CD4-positive, alpha-beta T cell (primary cell): ENCODE measurements at regions of chr15 and their contacts with region 1.

Region 1: GRCh38 chr15:81265944-81266775 is 57.8 kb downstream of the STARD5 start:
- DNase-seq: peak; percentile 71 to 92 (median 79)
- ATAC-seq: peak; percentile 89
- H3K4me3 ChIP-seq: peak overlapping the region; percentile 21
- H3K4me3 Mint-ChIP-seq: peak overlapping the region; percentile 66
- H3K27ac ChIP-seq: no peak overlapping the region
- H3K27ac Mint-ChIP-seq: no peak overlapping the region
- H3K4me1 ChIP-seq: peaks cover 23% of the 10 kb centered on the region
- H3K4me1 Mint-ChIP-seq: peaks cover 35% of the 10 kb centered on the region
- H3K27me3 ChIP-seq: no peaks in the 10 kb centered on the region
- H3K27me3 Mint-ChIP-seq: no peaks in the 10 kb centered on the region
- CTCF ChIP-seq: peak; percentile 75

Region 2: DNA sequence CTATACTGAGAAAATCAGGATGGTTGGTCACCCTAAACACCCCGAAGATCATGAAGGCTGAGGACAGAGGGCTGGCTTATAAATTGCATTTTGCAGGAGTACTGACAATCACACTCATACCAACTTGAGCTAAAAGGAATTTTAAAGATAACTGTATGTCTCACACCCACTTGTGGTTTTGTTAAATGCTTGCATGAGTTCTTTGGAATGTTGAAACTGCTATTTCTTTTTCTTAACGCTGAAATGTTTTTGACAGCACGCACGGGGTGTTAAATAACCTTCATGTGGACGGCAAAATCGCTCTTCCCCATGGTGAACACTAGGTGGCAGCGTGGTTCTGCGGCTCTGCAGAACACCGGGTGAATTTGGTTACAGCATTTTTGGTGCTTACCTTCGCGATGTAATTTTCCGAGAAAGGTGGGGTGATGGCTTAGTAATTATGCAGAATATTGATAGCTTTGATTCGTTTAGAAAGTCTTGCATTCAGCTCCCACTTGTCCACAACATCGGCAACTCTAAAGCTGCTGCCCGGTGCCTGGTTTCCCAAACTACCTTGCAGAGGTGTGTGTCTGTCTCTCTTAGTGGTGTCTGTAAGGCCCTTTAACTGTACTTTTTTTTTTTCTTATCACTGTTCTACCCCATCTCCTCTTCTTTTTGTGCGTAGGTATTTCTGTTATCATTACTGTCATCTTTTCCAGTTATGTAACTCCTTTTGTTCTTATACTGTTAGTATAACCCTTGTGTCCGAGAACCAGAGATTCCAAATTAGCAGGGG is 810.3 kb before region 1 on chr15:
- CTCF ChIA-PET with region 1: interaction called, 7 read pairs
- POLR2A ChIA-PET with region 1: no interaction called
- intact Hi-C with region 1: loop called (anchors 1 kb)
- DNase-seq: peak; percentile 17 to 81 (median 31)
- ATAC-seq: peak; percentile 64
- H3K4me3 ChIP-seq: no peak overlapping the region
- H3K4me3 Mint-ChIP-seq: no peak overlapping the region
- H3K27ac ChIP-seq: no peak overlapping the region
- H3K27ac Mint-ChIP-seq: no peak overlapping the region
- H3K4me1 ChIP-seq: peaks cover 2% of the 10 kb centered on the region
- H3K4me1 Mint-ChIP-seq: peaks cover 7% of the 10 kb centered on the region
- H3K27me3 ChIP-seq: peaks cover 0 to 11% of the 10 kb centered on the region in 2 experiments
- H3K27me3 Mint-ChIP-seq: peaks cover 23% of the 10 kb centered on the region
- CTCF ChIP-seq: peak; percentile 83

Region 3: DNA sequence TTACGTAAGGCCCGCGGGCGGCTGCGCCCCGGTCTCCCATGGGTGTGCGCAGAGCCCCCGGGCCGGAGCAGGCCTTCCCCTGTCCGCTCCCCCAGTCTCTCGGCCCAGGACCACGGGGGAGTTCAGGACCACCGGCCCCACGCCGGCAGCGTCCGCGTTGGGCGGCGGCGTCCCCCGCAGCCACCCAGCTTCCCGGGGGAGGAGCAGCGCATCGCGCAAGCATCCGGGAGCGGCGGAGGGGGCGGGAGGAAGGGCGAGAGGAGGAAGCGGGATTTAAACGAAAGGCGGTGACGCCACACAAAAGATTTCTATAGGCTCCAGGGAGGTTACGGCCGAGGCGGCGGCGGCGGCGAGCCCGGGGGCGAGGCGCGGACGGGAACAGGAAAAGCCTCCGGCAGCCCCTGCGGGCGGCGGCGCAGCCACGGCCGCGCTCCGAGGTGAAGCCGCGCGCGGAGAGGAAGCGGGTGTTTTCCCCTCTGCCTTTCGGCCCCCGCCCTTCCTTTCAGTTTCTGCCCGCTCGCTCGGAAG is 265.5 kb before region 1 on chr15 and contains the start of gene TLNRD1:
- CTCF ChIA-PET with region 1: interaction called, 3 read pairs
- POLR2A ChIA-PET with region 1: interaction called, 3 read pairs
- intact Hi-C with region 1: loop called in 1 of 2 experiments (anchors 5 kb)
- DNase-seq: peak; percentile 63 to 94 (median 76)
- ATAC-seq: peak; percentile 67
- H3K4me3 ChIP-seq: peak within 1 kb of the TSS; percentile 97
- H3K4me3 Mint-ChIP-seq: peak within 1 kb of the TSS; percentile 95
- H3K27ac ChIP-seq: peak within 1 kb of the TSS; percentile 94 to 96
- H3K27ac Mint-ChIP-seq: peak within 1 kb of the TSS; percentile 92
- H3K4me1 ChIP-seq: peaks cover 41% of the 10 kb centered on the region
- H3K4me1 Mint-ChIP-seq: peaks cover 62% of the 10 kb centered on the region
- H3K27me3 ChIP-seq: no peaks in the 10 kb centered on the region
- H3K27me3 Mint-ChIP-seq: no peaks in the 10 kb centered on the region
- CTCF ChIP-seq: no peak
- total RNA-seq, gene TLNRD1: 10.5 to 12.3 TPM

Region 4: DNA sequence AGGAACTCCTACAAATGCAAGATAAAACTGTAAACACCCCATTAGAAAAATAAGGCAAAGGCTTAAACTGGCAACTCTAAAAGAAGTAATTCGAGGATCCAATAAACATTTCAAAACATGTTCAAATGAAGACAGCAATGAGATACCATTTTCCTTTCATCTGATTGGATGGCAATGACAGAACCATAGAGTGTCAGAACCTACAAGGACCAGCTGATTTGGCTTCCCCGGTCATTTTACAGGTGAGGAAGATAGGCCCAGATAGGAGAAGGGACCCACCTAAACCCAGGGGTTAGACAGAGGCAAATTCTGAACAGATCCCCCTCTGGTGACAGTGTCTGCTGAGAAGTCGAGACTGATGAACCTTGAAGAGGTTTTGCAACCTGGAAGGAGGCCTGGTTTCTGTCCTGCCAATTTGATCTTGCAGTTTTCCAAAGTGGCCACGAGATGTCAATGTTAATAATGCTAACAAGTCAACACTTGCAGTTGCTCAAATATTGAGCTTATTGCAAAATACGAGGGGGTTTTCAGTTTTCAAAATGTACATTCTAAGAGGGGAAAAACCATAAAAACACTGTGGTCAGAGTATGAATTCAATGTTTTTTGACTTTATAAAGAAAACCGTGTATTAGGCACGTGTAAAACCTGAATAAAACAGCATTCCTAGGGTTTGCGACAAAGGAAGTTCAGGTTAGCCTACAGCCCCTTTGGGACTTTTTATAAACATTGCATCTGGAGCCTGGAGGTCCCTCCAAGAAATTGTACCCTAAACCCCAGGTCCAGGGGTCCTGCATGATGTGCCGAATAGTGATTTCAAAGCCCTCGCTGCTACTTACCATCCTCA is 110.6 kb before region 1 on chr15:
- CTCF ChIA-PET with region 1: interaction called, 24 read pairs
- POLR2A ChIA-PET with region 1: interaction called, 6 read pairs
- intact Hi-C with region 1: loop called (anchors 1 to 2 kb)
- DNase-seq: peak in 5 of 14 experiments; percentile 3 to 51 (median 40)
- ATAC-seq: no peak
- H3K4me3 ChIP-seq: no peak overlapping the region
- H3K4me3 Mint-ChIP-seq: no peak overlapping the region
- H3K27ac ChIP-seq: no peak overlapping the region
- H3K27ac Mint-ChIP-seq: no peak overlapping the region
- H3K4me1 ChIP-seq: peaks cover under 1% of the 10 kb centered on the region
- H3K4me1 Mint-ChIP-seq: peaks cover under 1% of the 10 kb centered on the region
- H3K27me3 ChIP-seq: no peaks in the 10 kb centered on the region
- H3K27me3 Mint-ChIP-seq: peaks cover 23% of the 10 kb centered on the region
- CTCF ChIP-seq: peak; percentile 43

Region 5: DNA sequence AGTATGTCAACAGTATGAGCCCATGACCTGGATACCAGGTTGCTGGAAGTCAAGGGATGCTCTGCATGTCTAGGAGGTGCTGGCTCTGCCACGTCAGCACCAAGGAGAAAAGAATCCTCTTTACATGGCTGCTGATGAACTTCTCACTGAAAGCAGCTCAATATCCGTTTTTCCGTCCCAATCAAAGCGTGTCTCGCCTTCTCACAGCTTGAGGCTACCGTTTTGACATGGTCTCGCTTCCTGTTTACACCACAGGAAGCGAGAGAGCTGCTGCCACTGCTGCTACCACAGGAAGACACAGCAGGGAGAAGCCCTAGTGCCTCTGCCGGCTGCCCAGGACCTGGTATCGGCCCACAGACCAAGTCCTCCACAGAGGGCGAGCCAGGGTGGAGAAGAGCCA is 30.5 kb after region 1 on chr15:
- CTCF ChIA-PET with region 1: interaction called, 17 read pairs
- POLR2A ChIA-PET with region 1: interaction called, 21 read pairs
- intact Hi-C with region 1: no loop called
- DNase-seq: peak; percentile 57 to 93 (median 73)
- ATAC-seq: peak; percentile 45
- H3K4me3 ChIP-seq: peak overlapping the region; percentile 96
- H3K4me3 Mint-ChIP-seq: peak overlapping the region; percentile 99
- H3K27ac ChIP-seq: peak overlapping the region; percentile 94 to 95
- H3K27ac Mint-ChIP-seq: peak overlapping the region; percentile 92
- H3K4me1 ChIP-seq: peaks cover 73% of the 10 kb centered on the region
- H3K4me1 Mint-ChIP-seq: peaks cover 68% of the 10 kb centered on the region
- H3K27me3 ChIP-seq: no peaks in the 10 kb centered on the region
- H3K27me3 Mint-ChIP-seq: no peaks in the 10 kb centered on the region
- CTCF ChIP-seq: no peak

Region 6: DNA sequence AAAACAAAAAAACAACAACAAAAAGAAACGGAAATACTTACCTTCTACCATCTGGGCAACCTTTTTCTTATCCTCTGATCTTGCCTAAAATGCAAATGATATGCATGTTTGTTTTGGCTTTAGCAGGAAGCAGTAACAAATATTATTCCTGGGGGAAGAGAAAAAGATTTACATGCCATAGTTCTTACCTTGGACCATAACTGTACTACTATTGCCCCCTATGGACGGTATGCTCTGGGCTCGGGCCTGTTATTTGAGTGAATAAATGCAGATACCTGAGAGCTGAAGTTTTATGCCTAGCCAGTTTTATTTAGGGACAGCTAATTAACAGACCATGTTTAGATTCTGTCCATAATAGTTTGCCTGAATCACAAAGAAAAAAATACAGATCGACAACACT is 70.4 kb after region 1 on chr15:
- CTCF ChIA-PET with region 1: interaction called, 11 read pairs
- POLR2A ChIA-PET with region 1: interaction called, 3 read pairs
- intact Hi-C with region 1: no loop called
- DNase-seq: peak in 11 of 14 experiments; percentile 23 to 71 (median 50)
- ATAC-seq: no peak
- H3K4me3 ChIP-seq: no peak overlapping the region
- H3K4me3 Mint-ChIP-seq: no peak overlapping the region
- H3K27ac ChIP-seq: no peak overlapping the region
- H3K27ac Mint-ChIP-seq: no peak overlapping the region
- H3K4me1 ChIP-seq: no peaks in the 10 kb centered on the region
- H3K4me1 Mint-ChIP-seq: peaks cover 13% of the 10 kb centered on the region
- H3K27me3 ChIP-seq: no peaks in the 10 kb centered on the region
- H3K27me3 Mint-ChIP-seq: no peaks in the 10 kb centered on the region
- CTCF ChIP-seq: peak; percentile 71

Region 7: DNA sequence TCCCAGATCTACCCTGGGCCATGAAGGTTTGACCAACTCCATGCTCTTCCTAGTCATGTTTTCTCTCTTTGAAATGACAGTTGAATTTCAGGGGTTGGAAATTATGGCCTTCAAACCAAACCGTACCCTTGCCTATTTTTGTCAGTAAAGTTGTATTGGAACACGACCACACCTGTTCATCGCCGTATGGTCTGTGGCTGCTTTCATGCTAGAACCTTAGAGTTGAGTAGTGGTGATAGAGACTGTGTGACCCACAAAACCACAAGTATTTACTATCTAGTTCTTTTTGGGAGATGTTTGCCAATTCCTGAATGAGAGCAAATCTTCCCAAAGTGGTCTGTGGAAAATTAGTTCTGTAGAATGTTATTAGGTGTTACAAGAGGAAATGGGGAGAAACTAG is 81.8 kb after region 1 on chr15:
- CTCF ChIA-PET with region 1: no interaction called
- POLR2A ChIA-PET with region 1: no interaction called
- intact Hi-C with region 1: no loop called
- DNase-seq: no peak
- ATAC-seq: no peak
- H3K4me3 ChIP-seq: no peak overlapping the region
- H3K4me3 Mint-ChIP-seq: no peak overlapping the region
- H3K27ac ChIP-seq: no peak overlapping the region
- H3K27ac Mint-ChIP-seq: no peak overlapping the region
- H3K4me1 ChIP-seq: no peaks in the 10 kb centered on the region
- H3K4me1 Mint-ChIP-seq: no peaks in the 10 kb centered on the region
- H3K27me3 ChIP-seq: no peaks in the 10 kb centered on the region
- H3K27me3 Mint-ChIP-seq: no peaks in the 10 kb centered on the region
- CTCF ChIP-seq: no peak

Region 8: DNA sequence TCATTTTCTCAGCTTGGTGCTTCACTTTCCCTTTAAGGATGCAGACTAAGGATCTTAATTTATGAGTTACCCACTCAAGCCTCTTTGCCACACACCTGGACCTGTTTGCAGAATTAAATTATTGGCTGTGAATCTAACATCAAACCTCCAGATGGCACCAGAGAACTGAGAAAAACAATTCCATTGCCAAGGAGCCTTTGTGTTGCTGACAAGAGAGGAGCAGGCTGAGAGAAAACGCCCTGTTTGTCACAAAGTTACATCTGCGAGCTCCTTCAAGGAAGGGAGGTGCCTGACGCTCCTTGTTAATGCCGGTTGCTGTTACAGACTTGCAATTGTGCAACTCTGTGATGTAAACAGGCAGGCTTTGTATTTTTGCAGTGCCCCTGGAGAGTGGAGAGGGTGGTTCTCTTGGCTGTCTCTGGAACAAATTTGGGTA is 144.2 kb after region 1 on chr15:
- CTCF ChIA-PET with region 1: interaction called, 10 read pairs
- POLR2A ChIA-PET with region 1: interaction called, 3 read pairs
- intact Hi-C with region 1: no loop called
- DNase-seq: peak in 6 of 14 experiments; percentile 11 to 73 (median 48)
- ATAC-seq: peak; percentile 92
- H3K4me3 ChIP-seq: no peak overlapping the region
- H3K4me3 Mint-ChIP-seq: no peak overlapping the region
- H3K27ac ChIP-seq: no peak overlapping the region
- H3K27ac Mint-ChIP-seq: no peak overlapping the region
- H3K4me1 ChIP-seq: peaks cover 12% of the 10 kb centered on the region
- H3K4me1 Mint-ChIP-seq: peaks cover 23% of the 10 kb centered on the region
- H3K27me3 ChIP-seq: peaks cover 2 to 8% of the 10 kb centered on the region in 2 experiments
- H3K27me3 Mint-ChIP-seq: peaks cover 17% of the 10 kb centered on the region
- CTCF ChIP-seq: peak; percentile 52

Region 9: DNA sequence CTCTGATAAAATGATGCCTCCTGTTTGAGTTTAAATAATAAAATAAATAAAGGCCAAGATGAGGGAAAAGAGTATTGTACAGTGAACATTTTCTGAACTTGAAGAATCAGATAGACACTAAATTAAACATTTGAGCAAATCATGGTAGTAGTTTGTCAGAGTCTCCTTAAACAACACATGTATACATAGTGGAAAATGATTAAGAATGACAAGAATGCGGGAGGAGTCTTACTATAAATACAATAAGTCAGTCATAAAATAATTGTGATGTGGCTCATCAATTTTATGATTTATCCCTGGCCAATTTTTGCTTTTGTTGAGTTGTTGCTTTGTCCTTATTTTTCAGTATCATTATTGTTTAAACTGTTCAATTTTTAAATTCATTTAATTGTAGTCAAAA is 265.8 kb after region 1 on chr15:
- CTCF ChIA-PET with region 1: no interaction called
- POLR2A ChIA-PET with region 1: no interaction called
- intact Hi-C with region 1: no loop called
- DNase-seq: no peak
- ATAC-seq: no peak
- H3K4me3 ChIP-seq: no peak overlapping the region
- H3K4me3 Mint-ChIP-seq: no peak overlapping the region
- H3K27ac ChIP-seq: no peak overlapping the region
- H3K27ac Mint-ChIP-seq: no peak overlapping the region
- H3K4me1 ChIP-seq: no peaks in the 10 kb centered on the region
- H3K4me1 Mint-ChIP-seq: no peaks in the 10 kb centered on the region
- H3K27me3 ChIP-seq: peaks cover 0 to 3% of the 10 kb centered on the region in 2 experiments
- H3K27me3 Mint-ChIP-seq: peaks cover 9% of the 10 kb centered on the region
- CTCF ChIP-seq: no peak